Heart right ventricle (tissue), 16 donors: ENCODE measurements at regions of chr2 and their contacts with region 1.

Region 1: DNA sequence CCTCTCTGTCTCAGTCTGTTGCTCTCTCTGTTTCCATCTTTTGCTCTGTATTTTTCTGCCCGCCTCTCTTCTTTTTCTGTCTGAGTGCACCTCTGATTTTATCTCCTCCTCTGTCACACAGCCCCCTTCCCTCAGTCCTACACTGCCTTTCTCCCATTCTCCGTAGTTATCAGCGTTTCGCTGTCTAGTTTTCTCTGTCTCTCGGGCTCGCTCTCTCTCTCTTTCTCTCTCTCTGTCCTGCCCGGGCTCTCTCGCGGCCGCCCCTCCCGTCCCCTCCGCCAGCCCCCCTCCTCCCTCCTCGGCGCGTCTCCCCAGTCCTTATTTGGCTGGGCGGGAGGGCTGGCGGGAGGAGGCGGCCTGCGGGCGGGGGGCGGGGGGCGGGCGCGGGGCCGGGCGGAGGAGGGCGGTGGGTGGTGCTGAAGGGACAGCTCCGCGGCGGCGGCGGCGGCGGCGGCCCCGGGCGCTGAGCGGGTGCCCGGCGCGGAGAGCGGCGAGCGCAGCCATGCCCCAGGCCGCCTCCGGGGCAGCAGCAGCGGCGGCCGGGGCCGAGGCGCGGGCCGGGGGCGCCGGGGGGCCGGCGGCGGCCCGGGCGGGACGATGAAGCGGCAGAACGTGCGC is at the start of gene KCNK3:
- DNase-seq: peak; percentile 66 to 68
- ATAC-seq: peak; percentile 72 to 93 (median 82)
- H3K4me3 ChIP-seq: peak within 1 kb of the TSS in 9 of 10 donors; percentile 14 to 44 (median 34)
- H3K27ac ChIP-seq: peak within 1 kb of the TSS in 7 of 10 donors; percentile 29 to 70 (median 65)
- H3K4me1 ChIP-seq: peaks cover 4 to 25% (median 18%) of the 10 kb centered on the region in 9 donors
- H3K27me3 ChIP-seq: peaks cover 0 to 80% (median 47%) of the 10 kb centered on the region in 7 donors
- CTCF ChIP-seq: no peak
- total RNA-seq, gene KCNK3: 0.19 to 6.8 (median 0.69) TPM

Region 2: DNA sequence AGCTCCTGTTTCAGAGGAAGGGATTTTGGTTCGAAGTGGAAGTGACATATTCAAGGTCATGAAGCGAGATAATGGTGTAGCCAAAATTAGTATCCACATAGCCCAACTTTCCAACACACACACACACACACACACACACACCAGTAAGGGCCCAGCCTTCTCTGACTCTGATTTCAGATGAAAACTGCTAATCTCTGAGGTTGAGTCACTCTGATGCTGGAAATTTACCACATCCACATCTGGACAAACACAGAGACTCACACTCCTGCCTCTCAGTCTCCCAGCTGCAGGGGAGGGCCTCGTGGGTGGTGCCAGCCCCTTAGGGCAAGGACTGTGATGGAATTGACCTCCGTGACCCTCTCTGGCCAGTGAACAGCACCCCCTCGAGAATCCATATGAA is 42.7 kb after region 1 on chr2:
- intact Hi-C with region 1: loop called in 1 of 10 experiments (anchors 5 kb)
- DNase-seq: peak in 1 of 2 donors; percentile 37
- ATAC-seq: peak; percentile 21 to 77 (median 63)
- H3K4me3 ChIP-seq: no peak overlapping the region
- H3K27ac ChIP-seq: peak overlapping the region in 1 of 10 donors; percentile 31
- H3K4me1 ChIP-seq: peaks cover 2 to 14% (median 8%) of the 10 kb centered on the region in 9 donors
- H3K27me3 ChIP-seq: no peaks in the 10 kb centered on the region
- CTCF ChIP-seq: no peak